ENCODE measurements at regions of chr10 and their contacts with region 1.

Region 1: GRCh38 chr10:13717931-13718772 is 131.4 kb downstream of the PRPF18 start:
- DNase-seq: peak; percentile 25
- ATAC-seq: peak; percentile 38
- H3K4me3 Mint-ChIP-seq: no peak overlapping the region
- H3K27ac Mint-ChIP-seq: peak overlapping the region; percentile 84
- H3K4me1 Mint-ChIP-seq: peaks cover 11% of the 10 kb centered on the region
- H3K27me3 Mint-ChIP-seq: no peaks in the 10 kb centered on the region
- CTCF ChIP-seq: no peak

Region 2: GRCh38 chr10:13707156-13707881 is 10.8 kb before region 1 on chr10:
- CTCF ChIA-PET with region 1: interaction called, 16 read pairs
- POLR2A ChIA-PET with region 1: interaction called, 3 read pairs
- DNase-seq: peak; percentile 70
- ATAC-seq: peak; percentile 72
- H3K4me3 Mint-ChIP-seq: peak overlapping the region; percentile 69
- H3K27ac Mint-ChIP-seq: peak overlapping the region; percentile 25
- H3K4me1 Mint-ChIP-seq: peaks cover 95% of the 10 kb centered on the region
- H3K27me3 Mint-ChIP-seq: no peaks in the 10 kb centered on the region
- CTCF ChIP-seq: no peak

Region 3: GRCh38 chr10:13743101-13743693 is 25.0 kb after region 1 on chr10:
- CTCF ChIA-PET with region 1: no interaction called
- POLR2A ChIA-PET with region 1: no interaction called
- DNase-seq: no peak
- ATAC-seq: no peak
- H3K4me3 Mint-ChIP-seq: no peak overlapping the region
- H3K27ac Mint-ChIP-seq: no peak overlapping the region; the same call in 1 of the 2 replicates
- H3K4me1 Mint-ChIP-seq: peaks cover 10% of the 10 kb centered on the region
- H3K27me3 Mint-ChIP-seq: no peaks in the 10 kb centered on the region
- CTCF ChIP-seq: no peak

Measured in WTC11 (cell line).